Ascending aorta (tissue), 2 donors: ENCODE measurements at regions of chr17 and their contacts with region 1.

Region 1: DNA sequence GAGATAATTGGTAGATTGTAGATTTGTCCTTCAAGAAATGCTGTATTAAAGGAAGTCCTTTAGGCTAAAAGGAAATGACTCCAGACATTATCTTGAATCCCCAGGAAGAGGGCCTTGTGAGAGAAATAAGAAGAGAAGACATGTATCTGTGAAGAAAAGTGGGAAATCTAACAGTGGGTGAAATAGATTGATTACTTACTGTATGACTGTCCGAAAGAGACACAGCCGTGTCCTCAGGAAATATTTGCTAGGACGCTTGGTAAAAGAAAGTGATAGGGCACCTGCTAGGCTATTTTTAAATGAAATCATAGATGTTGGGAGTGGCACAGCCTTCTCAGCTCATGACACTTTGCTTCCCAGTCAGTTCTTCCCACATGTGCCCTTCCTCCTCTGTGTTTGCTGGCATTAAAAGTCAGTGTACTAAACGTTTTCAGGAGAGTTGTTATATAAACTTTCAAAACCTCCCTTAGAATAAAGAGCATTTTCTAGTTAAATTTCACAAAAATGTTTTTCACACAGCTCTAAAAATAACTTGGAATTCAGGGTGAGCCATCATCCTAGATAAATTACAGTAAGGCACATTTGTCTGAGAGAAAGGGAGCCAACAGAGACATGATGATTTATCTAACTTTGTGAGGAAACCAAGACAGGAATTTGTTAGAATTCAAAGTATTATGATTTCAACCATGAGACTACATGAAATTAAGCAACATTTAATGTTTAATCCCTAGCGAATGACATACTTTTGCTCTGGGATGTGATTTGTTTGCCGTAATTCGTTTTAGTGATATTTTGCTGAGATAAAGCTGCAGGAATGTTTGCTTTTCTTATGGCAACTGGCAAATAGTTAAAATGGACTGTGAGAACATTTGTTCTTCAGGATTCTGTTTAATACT is 35.0 kb downstream of the DHRS7B start:
- DNase-seq: no peak
- H3K4me3 ChIP-seq: peak overlapping the region in 1 of 2 donors; percentile 11
- H3K27ac ChIP-seq: peak overlapping the region; percentile 60 to 68
- H3K4me1 ChIP-seq: peaks cover 13 to 37% of the 10 kb centered on the region in 2 donors
- H3K27me3 ChIP-seq: no peaks in the 10 kb centered on the region
- CTCF ChIP-seq: no peak

Region 2: GRCh38 chr17:21126645-21127510 is 34.9 kb before region 1 on chr17 and contains the start of gene DHRS7B:
- intact Hi-C with region 1: loop called (anchors 2 kb)
- DNase-seq: peak; percentile 79 to 97
- H3K4me3 ChIP-seq: peak within 1 kb of the TSS; percentile 81 to 85
- H3K27ac ChIP-seq: peak within 1 kb of the TSS; percentile 93 to 96
- H3K4me1 ChIP-seq: peaks cover 3 to 8% of the 10 kb centered on the region in 2 donors
- H3K27me3 ChIP-seq: no peaks in the 10 kb centered on the region
- CTCF ChIP-seq: peak in 1 of 3 experiments; percentile 4
- total RNA-seq, gene DHRS7B: 89.5 TPM

Region 3: GRCh38 chr17:21214015-21214776 is 52.5 kb after region 1 on chr17 and contains the start of gene TMEM11:
- intact Hi-C with region 1: loop called (anchors 2 kb)
- DNase-seq: peak; percentile 83 to 97
- H3K4me3 ChIP-seq: peak within 1 kb of the TSS; percentile 84 to 96
- H3K27ac ChIP-seq: peak within 1 kb of the TSS; percentile 95 to 97
- H3K4me1 ChIP-seq: peaks cover 8 to 34% of the 10 kb centered on the region in 2 donors
- H3K27me3 ChIP-seq: no peaks in the 10 kb centered on the region
- CTCF ChIP-seq: peak in 1 of 3 experiments; percentile 2
- total RNA-seq, gene TMEM11: 25.7 TPM

Region 4: GRCh38 chr17:21252796-21253645 is 91.3 kb after region 1 on chr17 and contains the start of gene NATD1:
- intact Hi-C with region 1: loop called (anchors 2 kb)
- DNase-seq: peak; percentile 63 to 94
- H3K4me3 ChIP-seq: peak within 1 kb of the TSS; percentile 50 to 86
- H3K27ac ChIP-seq: peak within 1 kb of the TSS; percentile 43 to 77
- H3K4me1 ChIP-seq: peaks cover 16 to 27% of the 10 kb centered on the region in 2 donors
- H3K27me3 ChIP-seq: no peaks in the 10 kb centered on the region
- CTCF ChIP-seq: peak in 1 of 3 experiments; percentile 15
- total RNA-seq, gene NATD1: 13.4 TPM

Region 5: DNA sequence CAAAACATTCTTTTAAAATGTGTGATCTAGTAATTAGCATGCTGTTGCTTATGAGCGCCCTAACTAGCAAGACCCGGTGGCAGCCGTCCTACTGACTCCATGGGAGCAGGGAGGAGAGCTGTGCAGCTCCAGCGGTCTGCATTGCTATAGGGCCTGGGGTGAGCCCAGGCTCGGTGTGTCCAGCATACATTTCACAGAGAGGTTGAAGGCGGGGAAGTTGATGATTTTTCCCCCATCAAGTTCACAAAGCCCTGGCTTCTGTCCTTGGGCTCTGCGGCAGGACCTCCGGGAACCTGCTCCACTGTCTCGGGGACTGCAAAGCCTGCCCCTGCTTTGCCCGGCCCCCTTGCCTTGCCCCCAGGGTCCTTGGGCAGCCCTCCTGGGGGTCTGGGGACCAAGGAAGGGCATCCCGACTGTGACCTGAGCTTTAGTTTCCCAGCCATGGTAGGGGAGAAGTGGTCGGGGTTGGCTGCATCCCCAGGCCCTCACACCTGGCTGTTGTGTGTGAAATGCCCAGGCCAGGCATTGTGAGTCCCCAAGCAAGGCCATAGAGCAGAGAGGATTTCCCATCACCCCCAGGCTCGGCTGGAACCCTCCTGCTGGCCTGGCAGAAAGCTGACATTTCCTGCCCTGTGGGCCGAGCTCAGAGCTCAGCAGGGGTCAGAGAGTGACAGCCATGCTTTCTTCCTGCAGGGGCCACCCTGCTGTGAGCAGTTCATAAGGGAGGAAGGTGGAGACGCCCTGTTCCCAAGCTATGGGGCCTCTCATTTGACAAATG is 239.3 kb after region 1 on chr17:
- intact Hi-C with region 1: loop called (anchors 5 kb)
- DNase-seq: no peak
- H3K4me3 ChIP-seq: no peak overlapping the region
- H3K27ac ChIP-seq: peak overlapping the region in 1 of 2 donors; percentile 79
- H3K4me1 ChIP-seq: peaks cover 0 to 2% of the 10 kb centered on the region in 2 donors
- H3K27me3 ChIP-seq: no peaks in the 10 kb centered on the region
- CTCF ChIP-seq: no peak